H1 (cell line): ENCODE measurements at regions of chr10 and their contacts with region 1.

Region 1: GRCh38 chr10:7424315-7424714 is 13.5 kb upstream of the SFMBT2 start:
- DNase-seq: peak in 1 of 2 experiments; percentile 58
- H3K4me3 ChIP-seq: no peak overlapping the region
- H3K27ac ChIP-seq: no peak overlapping the region
- H3K4me1 ChIP-seq: peaks cover 5 to 23% (median 17%) of the 10 kb centered on the region in 4 experiments; a peak in 6 of 7 replicates
- H3K27me3 ChIP-seq: peaks cover 0 to 1% (median 0%) of the 10 kb centered on the region in 4 experiments; a peak in 1 of 7 replicates
- CTCF ChIP-seq: peak in 1 of 3 experiments; percentile 12; a peak in 1 of 4 replicates
- EP300 ChIP-seq: no peak
- POLR2A ChIP-seq: no peak
- RAD21 ChIP-seq: peak in 1 of 2 experiments; percentile 29; a peak in 1 of 4 replicates

Region 2: DNA sequence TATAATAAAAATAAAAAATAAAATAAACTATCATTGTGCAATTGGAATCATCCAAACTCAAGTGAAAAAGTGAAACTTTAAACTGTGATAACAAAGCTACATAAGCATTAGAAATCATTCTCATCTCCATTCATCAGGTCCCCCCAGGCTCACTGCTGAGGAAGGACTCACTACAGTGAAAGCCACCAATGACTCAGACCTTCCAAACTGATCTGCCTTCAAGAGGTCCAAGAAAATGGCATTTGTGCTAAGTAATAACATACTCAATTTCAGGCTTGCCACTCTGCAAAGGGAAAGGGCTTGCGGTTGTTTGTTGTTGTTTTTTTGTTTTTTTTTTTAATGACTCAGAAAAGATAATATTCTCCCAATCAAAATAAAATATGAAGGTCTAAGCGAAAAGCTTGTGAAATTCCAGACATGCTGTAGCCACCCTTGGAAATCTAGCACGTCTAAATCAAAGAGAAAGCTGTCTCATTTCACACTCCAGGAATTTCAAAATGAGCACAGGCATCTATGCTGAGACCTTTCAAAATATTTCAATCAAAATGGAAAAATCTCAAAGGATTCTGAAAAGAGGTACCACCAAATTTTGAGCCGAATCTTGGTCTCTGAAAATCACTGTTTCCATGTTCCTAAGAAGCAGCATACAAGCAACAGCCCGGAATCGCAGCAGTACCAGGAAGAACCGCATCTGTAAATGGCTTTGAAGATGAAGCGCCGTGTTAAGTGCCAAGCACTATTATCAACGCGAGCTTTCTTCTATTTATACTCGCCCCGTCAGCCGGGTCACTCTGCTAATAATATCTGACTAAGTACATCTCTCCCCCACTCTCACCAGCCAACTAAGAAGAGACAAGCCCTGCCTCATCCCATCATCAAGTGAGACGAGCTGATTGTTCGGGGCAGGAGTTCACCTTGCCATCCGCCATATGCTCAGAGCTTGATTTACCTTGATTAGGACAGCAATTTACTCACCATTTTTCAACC is 27.0 kb before region 1 on chr10:
- CTCF ChIA-PET with region 1: no interaction called
- POLR2A ChIA-PET with region 1: no interaction called
- DNase-seq: no peak
- H3K4me3 ChIP-seq: no peak overlapping the region
- H3K27ac ChIP-seq: no peak overlapping the region
- H3K4me1 ChIP-seq: no peaks in the 10 kb centered on the region; a peak in 1 of 7 replicates
- H3K27me3 ChIP-seq: no peaks in the 10 kb centered on the region
- CTCF ChIP-seq: no peak
- EP300 ChIP-seq: no peak
- POLR2A ChIP-seq: no peak
- RAD21 ChIP-seq: no peak

Region 3: GRCh38 chr10:7408291-7409044 is 15.8 kb before region 1 on chr10:
- CTCF ChIA-PET with region 1: interaction called, 7 read pairs
- POLR2A ChIA-PET with region 1: interaction called, 10 read pairs
- DNase-seq: peak in 1 of 2 experiments; percentile 77
- H3K4me3 ChIP-seq: peak overlapping the region; percentile 78 to 91 (median 79)
- H3K27ac ChIP-seq: no peak overlapping the region
- H3K4me1 ChIP-seq: peaks cover 5 to 20% (median 13%) of the 10 kb centered on the region in 4 experiments
- H3K27me3 ChIP-seq: peaks cover 15 to 58% (median 46%) of the 10 kb centered on the region in 4 experiments; a peak in 6 of 7 replicates
- CTCF ChIP-seq: peak; percentile 47 to 55 (median 51)
- EP300 ChIP-seq: no peak
- POLR2A ChIP-seq: no peak
- RAD21 ChIP-seq: peak; percentile 49 to 72; a peak in 3 of 4 replicates